A549 (cell line): ENCODE measurements at regions of chr1 and their contacts with region 1.

Region 1: DNA sequence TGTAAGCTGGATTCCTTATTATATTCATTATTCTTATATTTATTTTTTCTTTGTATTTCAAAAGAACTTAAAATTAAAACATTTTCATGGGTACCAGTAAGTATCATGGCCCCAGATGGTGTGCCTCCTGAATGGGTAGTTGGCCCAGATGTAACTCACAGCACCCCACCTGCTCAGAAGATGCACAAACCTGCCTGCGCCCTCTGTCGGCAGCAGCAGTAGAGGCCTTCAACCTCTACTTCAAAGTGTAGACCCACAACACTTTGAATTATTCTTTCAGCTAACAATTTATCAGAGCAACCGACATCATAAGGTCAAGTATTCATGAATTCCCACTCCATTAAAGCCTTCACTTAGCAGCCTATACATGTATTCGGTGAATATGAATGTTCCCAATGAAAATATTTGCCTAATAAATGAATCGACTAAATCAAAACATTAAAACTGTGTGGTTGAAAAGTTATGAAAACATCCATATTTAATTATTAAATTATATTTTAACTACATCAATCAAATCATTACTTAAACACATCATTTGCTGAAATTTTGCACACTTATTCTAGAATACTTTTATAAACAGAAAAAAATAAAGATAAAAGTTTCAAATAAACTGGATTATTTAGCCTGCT is 25.4 kb downstream of the PIGM start:
- DNase-seq: peak; percentile 80 to 87
- ATAC-seq: peak; percentile 93 to 96
- H3K4me3 ChIP-seq: no peak overlapping the region
- H3K27ac ChIP-seq: no peak overlapping the region
- H3K4me1 ChIP-seq: no peaks in the 10 kb centered on the region
- CTCF ChIP-seq: peak; percentile 94
- EP300 ChIP-seq: no peak
- POLR2A ChIP-seq: no peak
- RAD21 ChIP-seq: peak; percentile 71 to 78

Region 2: DNA sequence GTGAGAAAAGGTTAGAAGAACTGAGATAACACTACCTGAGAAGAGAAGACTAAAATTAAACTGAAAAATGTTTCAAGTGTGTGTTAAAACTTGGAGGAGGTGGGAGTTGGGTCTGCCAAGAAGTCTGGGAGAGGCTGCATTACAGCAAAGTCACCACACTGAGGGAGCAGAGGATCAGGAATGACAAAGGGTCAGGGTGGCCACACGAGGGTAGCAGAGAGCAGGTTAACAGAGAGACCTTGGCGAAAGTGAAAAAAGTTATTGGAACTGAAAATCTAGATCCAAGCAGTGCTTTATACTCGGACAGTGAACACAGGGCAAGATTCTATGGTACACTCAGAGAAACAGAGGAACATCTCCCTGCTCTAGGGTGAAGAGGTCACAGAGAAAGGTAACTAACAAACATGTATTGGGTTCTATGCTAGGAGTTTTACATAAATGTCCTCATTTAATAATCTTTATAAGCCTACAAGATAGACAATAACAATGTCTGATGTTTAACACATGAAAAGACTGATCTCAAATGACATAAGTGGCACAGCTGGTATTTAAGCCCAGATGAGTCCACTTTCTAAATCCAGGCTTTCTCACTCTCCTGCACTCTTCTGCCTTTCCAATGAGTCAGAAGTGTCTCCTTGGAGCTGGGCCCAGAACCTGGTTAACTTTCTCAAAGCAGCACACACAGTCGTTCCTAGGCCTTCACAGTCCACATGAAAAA is 845.3 kb before region 1 on chr1:
- CTCF ChIA-PET with region 1: interaction called, 18 read pairs
- POLR2A ChIA-PET with region 1: no interaction called
- DNase-seq: peak; percentile 61 to 77
- ATAC-seq: peak; percentile 98 to 100
- H3K4me3 ChIP-seq: no peak overlapping the region
- H3K27ac ChIP-seq: 0 out of 6 replicates have a peak overlapping the region, but pooled peaks of 1 of the 2 experiments have one; percentile 31
- H3K4me1 ChIP-seq: peaks cover 8% of the 10 kb centered on the region
- CTCF ChIP-seq: peak; percentile 100
- EP300 ChIP-seq: no peak
- POLR2A ChIP-seq: no peak
- RAD21 ChIP-seq: peak; percentile 99 to 100

Region 3: GRCh38 chr1:159804924-159805323 is 201.5 kb before region 1 on chr1:
- CTCF ChIA-PET with region 1: interaction called, 52 read pairs
- POLR2A ChIA-PET with region 1: no interaction called
- DNase-seq: no peak
- ATAC-seq: no peak
- H3K4me3 ChIP-seq: no peak overlapping the region
- H3K27ac ChIP-seq: no peak overlapping the region
- H3K4me1 ChIP-seq: no peaks in the 10 kb centered on the region
- CTCF ChIP-seq: no peak
- EP300 ChIP-seq: no peak
- POLR2A ChIP-seq: no peak
- RAD21 ChIP-seq: no peak

Region 4: GRCh38 chr1:159924981-159925712 is 81.3 kb before region 1 on chr1 and contains the start of gene TAGLN2:
- CTCF ChIA-PET with region 1: interaction called, 665 read pairs
- POLR2A ChIA-PET with region 1: interaction called, 4 read pairs
- DNase-seq: peak; percentile 92 to 96
- ATAC-seq: peak; percentile 67 to 84
- H3K4me3 ChIP-seq: peak within 1 kb of the TSS; percentile 87
- H3K27ac ChIP-seq: peak within 1 kb of the TSS; percentile 97 to 99
- H3K4me1 ChIP-seq: peaks cover 40% of the 10 kb centered on the region
- CTCF ChIP-seq: no peak
- EP300 ChIP-seq: no peak
- POLR2A ChIP-seq: peak; percentile 96
- RAD21 ChIP-seq: no peak
- polyA plus RNA-seq, gene TAGLN2: 533 and 536 TPM in 2 replicates

Region 5: GRCh38 chr1:159979257-159979656 is 27.2 kb before region 1 on chr1:
- CTCF ChIA-PET with region 1: interaction called, 34 read pairs
- POLR2A ChIA-PET with region 1: no interaction called
- DNase-seq: no peak
- ATAC-seq: no peak
- H3K4me3 ChIP-seq: no peak overlapping the region
- H3K27ac ChIP-seq: no peak overlapping the region
- H3K4me1 ChIP-seq: no peaks in the 10 kb centered on the region
- CTCF ChIP-seq: no peak
- EP300 ChIP-seq: no peak
- POLR2A ChIP-seq: no peak
- RAD21 ChIP-seq: no peak

Region 6: GRCh38 chr1:160040476-160040875 is 34.0 kb after region 1 on chr1:
- CTCF ChIA-PET with region 1: interaction called, 18 read pairs
- POLR2A ChIA-PET with region 1: no interaction called
- DNase-seq: no peak
- ATAC-seq: no peak
- H3K4me3 ChIP-seq: no peak overlapping the region
- H3K27ac ChIP-seq: no peak overlapping the region
- H3K4me1 ChIP-seq: no peaks in the 10 kb centered on the region
- CTCF ChIP-seq: no peak
- EP300 ChIP-seq: no peak
- POLR2A ChIP-seq: no peak
- RAD21 ChIP-seq: no peak

Region 7: GRCh38 chr1:160244209-160244608 is 237.8 kb after region 1 on chr1:
- CTCF ChIA-PET with region 1: no interaction called
- POLR2A ChIA-PET with region 1: no interaction called
- DNase-seq: no peak
- ATAC-seq: no peak
- H3K4me3 ChIP-seq: no peak overlapping the region
- H3K27ac ChIP-seq: no peak overlapping the region
- H3K4me1 ChIP-seq: peaks cover 16% of the 10 kb centered on the region
- CTCF ChIP-seq: no peak
- EP300 ChIP-seq: no peak
- POLR2A ChIP-seq: no peak
- RAD21 ChIP-seq: no peak